Left ventricle myocardium inferior (tissue), 1 donor: ENCODE measurements at regions of chr13 and their contacts with region 1.

Region 1: DNA sequence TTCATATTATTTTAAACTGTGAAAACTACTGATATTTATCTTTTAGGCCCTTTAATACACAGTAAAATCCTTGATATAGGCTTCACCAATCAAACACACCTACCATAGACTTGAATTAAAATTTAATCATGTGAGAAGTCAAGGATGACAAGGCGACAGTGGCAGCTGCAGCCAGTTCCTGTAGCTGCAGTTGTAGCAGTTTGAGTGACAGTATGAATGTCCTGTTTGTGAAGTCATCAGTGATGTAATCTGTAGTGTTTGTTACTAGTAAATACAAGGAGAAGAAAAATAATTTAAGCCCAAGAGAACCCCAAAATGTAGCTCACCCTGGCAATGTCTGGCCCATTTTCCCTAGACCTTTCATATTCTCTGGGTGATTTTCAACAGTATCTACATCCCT is 897.0 kb downstream of the SLITRK6 start:
- DNase-seq: no peak
- H3K4me3 ChIP-seq: no peak overlapping the region
- H3K27ac ChIP-seq: no peak overlapping the region
- H3K4me1 ChIP-seq: no peaks in the 10 kb centered on the region
- H3K27me3 ChIP-seq: no peaks in the 10 kb centered on the region
- CTCF ChIP-seq: no peak

Region 2: GRCh38 chr13:85823832-85824231 is 921.6 kb after region 1 on chr13:
- intact Hi-C with region 1: loop called (anchors 5 kb)
- DNase-seq: no peak
- H3K4me3 ChIP-seq: no peak overlapping the region
- H3K27ac ChIP-seq: no peak overlapping the region
- H3K4me1 ChIP-seq: no peaks in the 10 kb centered on the region
- H3K27me3 ChIP-seq: no peaks in the 10 kb centered on the region
- CTCF ChIP-seq: no peak